Colonic mucosa (tissue), 4 donors: ENCODE measurements at regions of chr5 and their contacts with region 1.

Region 1: GRCh38 chr5:179608131-179608581 is 15.3 kb downstream of the HNRNPH1 start:
- DNase-seq: no peak
- H3K4me3 ChIP-seq: no peak overlapping the region
- H3K27ac ChIP-seq: no peak overlapping the region
- H3K4me1 ChIP-seq: no peaks in the 10 kb centered on the region
- H3K27me3 ChIP-seq: no peaks in the 10 kb centered on the region
- CTCF ChIP-seq: no peak

Region 2: GRCh38 chr5:179550511-179551230 is 57.5 kb before region 1 on chr5 and contains the start of gene RUFY1:
- intact Hi-C with region 1: loop called (anchors 5 kb)
- DNase-seq: peak; percentile 88
- H3K4me3 ChIP-seq: peak within 1 kb of the TSS; percentile 69
- H3K27ac ChIP-seq: peak within 1 kb of the TSS; percentile 92
- H3K4me1 ChIP-seq: no peaks in the 10 kb centered on the region
- H3K27me3 ChIP-seq: no peaks in the 10 kb centered on the region
- CTCF ChIP-seq: no peak
- total RNA-seq, gene RUFY1: 37.1 to 44.0 TPM

Region 3: GRCh38 chr5:179568721-179569120 is 39.4 kb before region 1 on chr5:
- intact Hi-C with region 1: no loop called
- DNase-seq: no peak
- H3K4me3 ChIP-seq: no peak overlapping the region
- H3K27ac ChIP-seq: no peak overlapping the region
- H3K4me1 ChIP-seq: no peaks in the 10 kb centered on the region
- H3K27me3 ChIP-seq: no peaks in the 10 kb centered on the region
- CTCF ChIP-seq: no peak

Region 4: GRCh38 chr5:179879010-179879689 is 271.0 kb after region 1 on chr5:
- intact Hi-C with region 1: no loop called
- DNase-seq: no peak
- H3K4me3 ChIP-seq: no peak overlapping the region
- H3K27ac ChIP-seq: no peak overlapping the region
- H3K4me1 ChIP-seq: no peaks in the 10 kb centered on the region
- H3K27me3 ChIP-seq: no peaks in the 10 kb centered on the region
- CTCF ChIP-seq: no peak